ENCODE measurements at regions of chr18 and their contacts with region 1.

Region 1: GRCh38 chr18:62425465-62426195 is 97.2 kb upstream of the ZCCHC2 start:
- DNase-seq: peak; percentile 10 to 92 (median 67)

Region 2: GRCh38 chr18:62264984-62265383 is 160.6 kb before region 1 on chr18:
- intact Hi-C with region 1: no loop called
- DNase-seq: no peak

Region 3: GRCh38 chr18:62522504-62523254 is 97.0 kb after region 1 on chr18 and contains the start of gene ZCCHC2:
- intact Hi-C with region 1: loop called (anchors 5 kb)
- DNase-seq: peak; percentile 93 to 100 (median 99)

Region 4: DNA sequence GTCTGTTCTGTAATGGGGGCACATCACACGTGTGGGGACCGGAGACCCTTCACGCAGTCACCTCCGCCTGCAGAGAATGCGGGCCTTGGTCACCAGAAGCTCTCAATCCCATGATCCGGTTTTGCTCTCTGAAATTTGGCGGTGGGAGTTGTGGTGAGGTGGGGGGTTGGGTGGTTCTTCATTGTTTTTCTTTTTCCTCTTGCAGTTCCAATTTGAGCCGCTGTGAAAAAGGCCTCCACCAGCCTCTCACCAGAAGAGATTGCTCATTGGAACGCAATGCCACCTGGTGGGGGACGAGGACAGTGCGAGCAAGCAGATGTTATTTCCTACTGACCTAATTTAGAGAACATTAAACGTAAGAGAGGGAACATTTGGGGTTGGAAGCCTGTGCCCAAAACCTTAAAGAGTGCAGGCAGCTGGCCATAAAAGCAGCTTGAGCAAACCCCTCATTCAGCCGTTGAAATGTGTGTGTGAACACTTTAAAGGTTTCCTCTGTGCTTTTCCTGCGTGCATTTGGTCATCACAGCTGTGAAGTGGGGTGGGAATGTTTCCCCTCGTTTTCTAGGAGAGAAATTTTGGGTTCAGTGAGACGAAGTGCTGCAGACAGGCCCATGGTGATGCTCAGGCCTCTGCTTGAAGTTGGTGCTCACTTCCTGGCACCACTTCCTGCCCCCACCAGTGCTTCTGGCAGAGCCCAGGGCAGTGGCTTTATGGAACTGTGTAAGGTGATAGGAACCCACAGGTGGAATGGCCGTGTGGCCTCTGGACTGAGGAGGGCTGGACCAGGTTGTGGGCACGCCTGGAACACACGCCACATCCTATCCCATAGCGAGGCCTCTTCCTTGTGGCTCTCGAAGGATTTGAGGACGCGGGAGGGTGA is 158.9 kb after region 1 on chr18:
- intact Hi-C with region 1: loop called (anchors 2 kb)
- DNase-seq: peak; percentile 77 to 95 (median 89)

Measured in head of caudate nucleus (tissue), 42 donors.